Activated CD4-positive, alpha-beta T cell treated with anti-CD3 and anti-CD28 coated beads for 36 hours (primary cell): ENCODE measurements at regions of chr19 and their contacts with region 1.

Region 1: DNA sequence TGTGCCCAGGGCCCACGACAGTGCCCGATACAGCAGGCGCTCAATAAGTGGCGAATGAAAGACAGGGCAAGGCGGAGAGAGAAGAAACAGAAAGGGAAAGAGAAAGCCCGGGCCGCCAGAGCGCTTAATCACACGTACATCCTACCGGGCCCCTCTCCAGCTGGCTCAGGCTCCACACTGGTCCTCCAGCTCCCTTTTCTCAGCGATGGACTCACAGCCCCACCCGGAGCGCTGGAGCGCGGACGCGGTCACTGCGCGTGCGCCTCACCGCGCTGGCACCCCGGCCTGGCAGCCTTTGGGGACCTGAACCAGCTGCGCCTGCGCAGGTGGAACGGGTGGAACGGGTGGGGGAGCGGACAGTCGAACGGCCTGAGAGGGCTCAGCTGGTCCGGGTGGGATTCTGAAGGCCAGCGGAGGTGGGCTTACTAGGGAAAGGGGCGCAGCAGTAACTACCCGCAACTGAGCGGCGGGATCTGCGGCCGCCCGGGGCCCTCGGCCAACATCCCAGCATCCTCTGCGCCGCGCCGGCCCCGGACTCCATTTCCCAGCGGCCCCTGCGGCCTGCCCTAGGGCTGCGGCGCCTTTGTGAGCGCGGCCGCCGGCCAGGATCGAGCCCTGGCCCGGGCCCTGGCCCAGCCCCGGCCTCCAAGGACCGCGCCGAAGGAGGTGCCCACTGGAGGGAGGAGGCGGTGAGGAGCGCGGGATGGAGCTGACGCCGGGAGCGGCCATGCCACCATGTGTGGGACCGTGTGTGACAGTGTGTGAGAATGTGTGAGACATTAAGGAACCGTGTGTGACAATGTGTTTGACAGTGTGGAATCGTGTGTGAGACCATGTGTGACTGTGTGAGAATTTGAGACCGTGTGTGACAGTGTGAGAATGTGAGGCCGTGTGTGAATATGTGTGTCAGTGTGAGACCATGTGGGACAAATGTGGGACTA is at the start of gene ZNF583:
- DNase-seq: peak; percentile 94
- ATAC-seq: peak; percentile 84
- H3K4me3 Mint-ChIP-seq: peak within 1 kb of the TSS; percentile 80
- H3K27ac Mint-ChIP-seq: peak within 1 kb of the TSS; percentile 80
- H3K4me1 Mint-ChIP-seq: peaks cover 32% of the 10 kb centered on the region
- H3K27me3 Mint-ChIP-seq: no peaks in the 10 kb centered on the region
- total RNA-seq, gene ZNF583: 2.1 to 3.0 TPM

Region 2: DNA sequence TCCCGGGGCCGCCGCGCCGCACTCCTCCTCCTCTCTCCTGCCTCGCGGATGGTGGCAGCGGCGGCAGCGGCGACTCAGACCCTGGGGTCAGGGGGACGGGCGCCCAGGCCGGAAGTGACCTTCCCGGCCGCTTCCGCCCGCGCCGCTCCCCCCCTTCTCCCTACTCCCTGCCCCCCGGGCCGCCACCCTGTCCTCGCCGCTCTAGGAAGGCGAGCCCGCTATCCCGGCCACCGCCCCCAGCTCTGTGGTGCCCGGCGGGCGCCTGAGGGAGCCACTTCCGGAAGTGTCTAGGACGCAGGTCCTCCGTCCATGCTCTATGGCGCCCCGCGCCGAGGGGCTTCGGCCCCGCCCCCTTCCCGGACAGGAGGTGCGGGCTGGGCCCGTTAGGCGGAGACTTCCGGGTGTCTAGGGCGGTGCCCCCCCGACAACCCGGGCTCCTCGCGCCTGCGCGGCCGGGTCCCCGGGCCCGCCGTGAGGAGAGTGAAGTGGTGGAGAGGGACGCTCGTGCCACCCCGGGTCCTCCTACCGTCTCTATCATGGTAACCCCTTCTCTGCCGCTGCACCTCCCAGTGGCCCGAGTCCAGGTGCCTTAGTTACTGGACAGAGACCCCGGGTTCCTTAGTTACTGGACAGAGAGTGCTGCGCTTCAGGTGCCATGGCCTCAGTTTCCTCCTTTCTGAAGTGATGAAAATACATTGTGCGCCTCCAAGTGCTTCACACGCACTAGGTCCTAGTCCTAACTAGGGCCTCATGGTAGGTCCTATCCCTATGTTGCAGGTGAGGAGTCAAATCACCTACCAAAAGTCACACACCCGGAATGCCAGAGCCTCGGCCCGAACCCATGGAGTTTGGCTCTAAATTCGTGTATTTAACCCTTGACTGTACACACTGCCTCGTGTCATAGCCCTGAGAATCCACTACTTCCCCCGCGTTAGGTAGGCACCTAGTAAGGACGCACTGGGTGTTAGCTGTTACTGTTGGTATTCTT is 282.6 kb before region 1 on chr19 and contains the start of gene ZNF787:
- CTCF ChIA-PET with region 1: no interaction called
- POLR2A ChIA-PET with region 1: no interaction called
- intact Hi-C with region 1: loop called in 1 of 2 experiments (anchors 2 kb)
- DNase-seq: peak; percentile 98
- ATAC-seq: peak; percentile 92
- H3K4me3 Mint-ChIP-seq: peak within 1 kb of the TSS; percentile 82
- H3K27ac Mint-ChIP-seq: peak within 1 kb of the TSS; percentile 91
- H3K4me1 Mint-ChIP-seq: peaks cover 48% of the 10 kb centered on the region
- H3K27me3 Mint-ChIP-seq: no peaks in the 10 kb centered on the region
- total RNA-seq, gene ZNF787: 27.6 to 28.4 TPM

Region 3: GRCh38 chr19:56383826-56384605 is 20.0 kb before region 1 on chr19:
- CTCF ChIA-PET with region 1: no interaction called
- POLR2A ChIA-PET with region 1: no interaction called
- intact Hi-C with region 1: loop called in 1 of 2 experiments (anchors 1 kb)
- DNase-seq: no peak
- ATAC-seq: no peak
- H3K4me3 Mint-ChIP-seq: no peak overlapping the region
- H3K27ac Mint-ChIP-seq: no peak overlapping the region
- H3K4me1 Mint-ChIP-seq: peaks cover 7% of the 10 kb centered on the region
- H3K27me3 Mint-ChIP-seq: no peaks in the 10 kb centered on the region

Region 4: GRCh38 chr19:56507446-56508289 is 103.6 kb after region 1 on chr19 and contains the start of gene ZNF471:
- CTCF ChIA-PET with region 1: no interaction called
- POLR2A ChIA-PET with region 1: no interaction called
- intact Hi-C with region 1: loop called in 1 of 2 experiments (anchors 1 kb)
- DNase-seq: peak; percentile 96
- ATAC-seq: peak; percentile 99
- H3K4me3 Mint-ChIP-seq: no peak within 1 kb of the TSS
- H3K27ac Mint-ChIP-seq: peak within 1 kb of the TSS; percentile 12
- H3K4me1 Mint-ChIP-seq: peaks cover 5% of the 10 kb centered on the region
- H3K27me3 Mint-ChIP-seq: peaks cover 2% of the 10 kb centered on the region
- total RNA-seq, gene ZNF471: 1.4 to 1.5 TPM

Region 5: DNA sequence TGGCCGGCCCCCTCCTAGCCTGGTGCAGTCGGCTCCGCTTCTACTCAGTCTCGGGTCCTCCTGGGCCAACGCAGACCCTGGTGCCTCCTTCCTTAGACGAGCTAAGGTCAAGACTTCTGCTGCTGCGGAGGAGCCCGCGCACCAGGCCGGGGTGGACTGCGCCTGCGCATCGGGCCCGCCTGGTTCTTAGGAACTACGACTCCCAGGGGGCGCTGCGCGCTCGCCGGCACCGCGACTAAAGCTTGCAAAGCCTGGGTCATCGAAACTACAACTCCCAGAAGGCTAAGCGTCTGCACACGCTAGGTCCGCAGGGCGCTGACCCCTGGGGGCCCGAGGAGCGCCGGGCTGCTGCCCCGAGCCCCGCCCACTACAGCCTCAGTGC is 267.6 kb after region 1 on chr19 and contains the start of gene ZNF835:
- CTCF ChIA-PET with region 1: no interaction called
- POLR2A ChIA-PET with region 1: no interaction called
- intact Hi-C with region 1: loop called in 1 of 2 experiments (anchors 1 kb)
- DNase-seq: peak; percentile 94
- ATAC-seq: peak; percentile 96
- H3K4me3 Mint-ChIP-seq: peak within 1 kb of the TSS; percentile 84
- H3K27ac Mint-ChIP-seq: peak within 1 kb of the TSS; percentile 87
- H3K4me1 Mint-ChIP-seq: peaks cover 11% of the 10 kb centered on the region
- H3K27me3 Mint-ChIP-seq: no peaks in the 10 kb centered on the region
- total RNA-seq, gene ZNF835: 2.8 to 4.5 TPM

Region 6: DNA sequence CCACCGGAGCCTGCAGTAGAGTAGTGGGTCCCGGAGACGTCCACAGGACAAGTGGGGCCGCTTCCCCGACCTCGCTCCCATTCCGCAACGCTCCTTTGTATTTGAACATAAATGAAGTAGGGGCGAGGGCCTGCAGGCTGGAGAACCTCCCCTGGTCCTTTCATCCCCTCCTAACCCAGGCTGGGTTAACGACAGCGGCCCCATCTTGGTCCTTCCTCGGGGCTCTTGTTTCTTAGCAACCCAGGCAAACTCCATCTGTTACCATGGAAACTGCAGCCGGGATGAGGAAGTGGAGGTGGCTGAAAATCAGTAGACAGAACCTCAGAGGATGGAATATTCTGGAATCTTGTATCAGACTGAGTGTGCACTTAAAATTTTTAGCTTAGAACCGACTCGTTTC is 583.1 kb after region 1 on chr19:
- CTCF ChIA-PET with region 1: no interaction called
- POLR2A ChIA-PET with region 1: no interaction called
- intact Hi-C with region 1: no loop called
- DNase-seq: no peak
- ATAC-seq: no peak
- H3K4me3 Mint-ChIP-seq: no peak overlapping the region
- H3K27ac Mint-ChIP-seq: no peak overlapping the region
- H3K4me1 Mint-ChIP-seq: no peaks in the 10 kb centered on the region
- H3K27me3 Mint-ChIP-seq: no peaks in the 10 kb centered on the region